Upper lobe of right lung (tissue), 1 donor: ENCODE measurements at regions of chr12 and their contacts with region 1.

Region 1: DNA sequence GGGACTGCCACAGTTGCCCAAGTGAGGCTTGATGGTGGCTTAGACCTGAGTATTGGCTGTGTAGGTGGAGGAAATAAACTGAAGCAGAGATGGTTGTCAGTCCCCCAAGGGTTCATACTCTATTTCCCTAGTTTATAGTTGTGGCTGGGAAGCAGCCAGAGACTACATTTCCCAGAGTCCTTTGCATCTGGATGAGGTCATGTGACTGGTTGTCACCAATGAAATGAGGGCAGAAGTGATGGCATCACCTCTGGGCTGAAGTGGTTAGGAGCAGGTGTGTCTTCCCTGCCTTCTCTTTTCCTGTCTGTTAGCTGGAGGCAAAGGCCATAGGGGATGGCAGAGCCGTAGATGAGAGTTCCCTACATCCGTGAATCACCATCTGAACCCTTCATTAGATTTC is 16.3 kb upstream of the NOS1 start:
- DNase-seq: no peak
- ATAC-seq: no peak
- H3K4me3 ChIP-seq: no peak overlapping the region
- H3K27ac ChIP-seq: no peak overlapping the region
- H3K4me1 ChIP-seq: no peaks in the 10 kb centered on the region
- H3K27me3 ChIP-seq: no peaks in the 10 kb centered on the region
- CTCF ChIP-seq: no peak

Region 2: DNA sequence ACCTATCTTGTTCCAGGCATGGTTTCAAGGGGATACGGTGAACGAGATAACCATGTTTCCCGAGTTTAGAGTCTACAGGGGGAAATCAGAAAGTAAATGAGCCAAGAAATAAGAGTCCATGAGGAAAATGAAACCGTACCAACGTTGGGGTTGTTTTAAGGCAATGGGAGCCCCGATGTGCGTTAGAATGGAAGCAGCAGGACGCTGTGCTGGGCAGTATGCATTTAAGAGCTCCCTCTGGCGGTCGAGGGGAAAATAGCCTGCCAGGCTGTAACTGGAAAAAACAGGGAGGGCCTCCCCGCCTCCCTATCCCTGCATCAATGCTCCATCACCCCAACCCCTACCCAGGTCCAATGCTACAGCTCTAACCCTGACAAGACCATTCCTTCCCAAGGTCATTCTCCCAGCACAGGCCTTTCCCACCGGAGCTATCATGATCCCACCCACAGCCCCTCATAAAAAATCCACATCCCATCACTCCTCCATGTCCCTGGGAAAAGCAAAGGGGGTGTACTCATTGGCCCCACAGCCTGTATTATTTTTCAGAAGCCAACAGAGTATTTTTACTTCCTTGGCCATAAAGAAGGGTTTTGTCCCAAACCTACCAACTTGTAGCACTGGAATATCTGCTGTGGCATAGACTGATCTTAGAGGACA is 210.0 kb after region 1 on chr12:
- intact Hi-C with region 1: loop called (anchors 10 kb)
- DNase-seq: peak; percentile 71
- ATAC-seq: peak; percentile 88
- H3K4me3 ChIP-seq: no peak overlapping the region
- H3K27ac ChIP-seq: no peak overlapping the region
- H3K4me1 ChIP-seq: no peaks in the 10 kb centered on the region
- H3K27me3 ChIP-seq: no peaks in the 10 kb centered on the region
- CTCF ChIP-seq: peak; percentile 87

Region 3: DNA sequence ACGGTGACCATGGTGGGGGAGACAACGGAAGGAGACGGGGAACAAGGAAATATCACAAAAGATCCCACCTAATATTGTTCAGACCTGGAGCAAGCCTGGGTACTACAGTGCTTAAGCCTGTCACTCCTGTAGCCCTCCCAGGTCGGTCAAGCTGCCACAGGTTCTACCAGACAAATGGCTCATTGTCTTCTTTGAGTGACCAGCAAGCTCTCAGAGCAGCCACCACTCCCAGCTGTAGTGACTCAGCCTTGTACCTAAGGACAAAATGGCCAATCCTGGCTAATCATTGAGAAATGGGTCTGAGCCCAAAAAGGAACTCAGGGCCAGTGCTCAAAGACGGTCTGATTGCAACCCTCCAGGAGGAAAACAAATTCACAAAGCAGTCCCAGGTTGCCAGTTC is 222.1 kb after region 1 on chr12:
- intact Hi-C with region 1: no loop called
- DNase-seq: no peak
- ATAC-seq: no peak
- H3K4me3 ChIP-seq: no peak overlapping the region
- H3K27ac ChIP-seq: no peak overlapping the region
- H3K4me1 ChIP-seq: no peaks in the 10 kb centered on the region
- H3K27me3 ChIP-seq: no peaks in the 10 kb centered on the region
- CTCF ChIP-seq: no peak